A673 (cell line): ENCODE measurements at regions of chr21 and their contacts with region 1.

Region 1: DNA sequence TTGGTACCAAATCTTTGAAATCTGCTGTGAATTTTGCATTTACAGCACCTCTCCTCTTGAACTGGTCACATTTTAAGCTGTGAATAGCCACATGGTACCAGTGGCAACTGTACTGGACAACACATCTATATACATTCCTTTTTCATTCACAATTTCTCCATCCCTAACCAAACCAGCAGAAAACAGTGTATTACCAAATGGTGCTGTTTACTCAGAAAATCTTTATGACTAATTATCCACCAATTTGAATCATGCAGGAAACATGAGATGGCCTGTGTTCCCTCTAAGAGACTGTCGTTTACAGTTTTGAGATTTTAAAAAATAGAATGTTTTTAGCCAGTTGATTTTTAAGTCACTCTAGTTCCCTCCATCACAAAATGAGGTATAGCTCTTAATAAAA is 17.6 kb upstream of the CCT8 start:
- DNase-seq: no peak
- H3K4me3 ChIP-seq: no peak overlapping the region
- H3K27ac ChIP-seq: no peak overlapping the region
- H3K4me1 ChIP-seq: peaks cover 14% of the 10 kb centered on the region
- H3K27me3 ChIP-seq: no peaks in the 10 kb centered on the region
- CTCF ChIP-seq: no peak

Region 2: DNA sequence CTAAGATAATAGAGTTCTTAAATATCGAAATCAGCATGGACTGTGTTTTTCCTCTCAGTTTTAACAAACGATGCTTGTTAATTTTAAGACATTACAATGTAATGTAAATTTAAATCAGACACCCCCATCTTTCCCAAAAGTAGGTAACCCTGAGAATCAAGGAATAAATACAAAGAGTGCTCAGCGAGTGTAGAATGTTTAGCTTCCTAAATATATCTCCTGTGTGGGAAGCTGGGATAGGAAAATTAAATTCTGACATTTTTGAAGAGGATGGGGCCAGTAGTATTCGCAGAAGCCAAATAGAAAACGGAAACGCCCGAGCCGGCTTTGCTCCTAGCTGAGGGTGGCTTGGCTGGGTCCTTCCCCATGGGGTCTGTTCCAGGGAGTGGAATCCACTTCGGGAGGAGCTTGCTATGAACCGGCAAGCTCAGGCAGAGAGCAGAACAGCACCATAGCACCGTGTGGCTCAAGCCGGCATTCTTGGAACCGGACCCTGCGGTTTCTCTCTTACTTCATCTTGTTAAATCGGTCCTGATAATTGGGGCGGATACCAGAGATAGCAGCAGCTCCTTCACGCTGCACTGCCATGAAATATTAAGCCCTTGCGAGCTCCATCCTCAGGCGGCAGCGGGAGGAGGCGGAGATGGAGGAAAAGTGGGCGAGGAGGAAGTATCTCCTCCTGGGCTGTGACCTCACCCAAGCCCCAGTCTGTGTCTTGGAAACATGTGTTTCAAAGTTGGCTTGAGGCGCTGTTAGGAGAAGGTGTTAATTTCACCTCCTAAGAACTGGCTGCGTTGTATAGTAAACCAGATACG is 64.3 kb after region 1 on chr21:
- CTCF ChIA-PET with region 1: interaction called, 22 read pairs
- POLR2A ChIA-PET with region 1: no interaction called
- intact Hi-C with region 1: loop called (anchors 5 kb)
- DNase-seq: peak; percentile 45
- H3K4me3 ChIP-seq: peak overlapping the region; percentile 24
- H3K27ac ChIP-seq: no peak overlapping the region
- H3K4me1 ChIP-seq: peaks cover 21% of the 10 kb centered on the region
- H3K27me3 ChIP-seq: no peaks in the 10 kb centered on the region
- CTCF ChIP-seq: no peak

Region 3: GRCh38 chr21:29164325-29164942 is 73.4 kb after region 1 on chr21:
- CTCF ChIA-PET with region 1: no interaction called
- POLR2A ChIA-PET with region 1: no interaction called
- intact Hi-C with region 1: loop called (anchors 5 kb)
- DNase-seq: peak; percentile 88
- H3K4me3 ChIP-seq: no peak overlapping the region
- H3K27ac ChIP-seq: no peak overlapping the region
- H3K4me1 ChIP-seq: peaks cover 12% of the 10 kb centered on the region
- H3K27me3 ChIP-seq: no peaks in the 10 kb centered on the region
- CTCF ChIP-seq: peak; percentile 86

Region 4: DNA sequence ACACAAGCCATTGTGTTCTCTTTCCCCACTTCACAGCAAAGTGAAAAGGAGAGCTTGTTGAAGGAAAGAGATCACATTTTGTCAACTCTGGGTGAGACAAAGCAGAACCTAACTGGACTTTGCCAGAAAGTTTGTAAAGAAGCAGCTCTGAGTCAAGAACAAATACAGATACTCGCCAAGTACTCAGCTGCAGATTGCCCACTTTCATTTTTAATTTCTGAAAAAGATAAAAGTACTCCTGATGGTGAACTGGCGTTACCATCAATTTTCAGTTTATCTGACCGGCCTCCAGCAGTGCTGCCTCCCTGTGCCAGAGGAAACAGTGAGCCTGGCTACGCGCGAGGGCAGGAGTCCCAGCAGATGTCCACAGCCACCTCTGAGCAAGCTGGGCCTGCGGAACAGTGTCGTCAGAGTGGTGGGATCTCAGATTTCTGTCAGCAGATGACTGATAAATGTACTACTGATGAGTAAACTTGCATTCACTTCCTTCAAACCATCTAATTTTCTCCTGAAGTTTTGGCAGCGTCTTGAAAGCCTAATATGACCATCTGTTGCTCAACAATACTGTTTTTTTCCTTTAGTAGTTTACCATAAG is 251.4 kb after region 1 on chr21:
- CTCF ChIA-PET with region 1: interaction called, 3 read pairs
- POLR2A ChIA-PET with region 1: no interaction called
- intact Hi-C with region 1: loop called (anchors 10 kb)
- DNase-seq: peak; percentile 83
- H3K4me3 ChIP-seq: peak overlapping the region; percentile 11
- H3K27ac ChIP-seq: peak overlapping the region; percentile 74
- H3K4me1 ChIP-seq: peaks cover 47% of the 10 kb centered on the region
- H3K27me3 ChIP-seq: no peaks in the 10 kb centered on the region
- CTCF ChIP-seq: no peak

Region 5: DNA sequence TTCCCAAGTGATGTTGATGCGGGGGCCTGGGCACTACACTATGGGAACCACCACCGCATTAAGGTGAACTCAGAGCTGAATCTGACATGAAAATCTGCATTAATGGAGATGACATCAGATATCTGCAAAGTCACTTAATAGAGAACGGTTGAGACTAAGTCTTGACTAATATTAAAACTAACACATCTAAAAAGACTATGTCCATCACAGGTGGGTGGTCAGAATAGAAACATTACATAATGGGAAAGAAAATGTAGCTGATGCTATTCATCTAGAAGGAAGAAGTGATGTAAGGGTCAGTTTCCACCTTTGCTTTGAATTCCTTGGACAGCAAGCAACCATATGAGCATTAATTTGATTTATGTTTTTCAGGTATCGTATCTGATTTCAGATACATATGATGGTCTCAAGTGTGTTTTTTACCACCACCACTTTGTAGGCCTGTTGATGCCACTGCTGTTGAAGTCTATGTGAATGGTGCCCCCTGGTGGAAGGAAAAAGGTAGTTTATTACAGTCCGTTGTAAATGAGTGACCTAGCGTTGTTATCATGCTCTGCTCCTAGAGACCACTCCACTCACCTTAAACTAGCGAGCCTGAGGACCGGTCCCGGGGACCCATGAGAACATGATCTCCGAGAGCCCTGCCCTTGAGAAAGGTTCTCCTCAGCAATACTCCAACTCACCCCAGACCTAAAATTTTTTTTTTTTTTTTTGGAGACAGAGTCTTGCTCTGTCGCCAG is 281.2 kb after region 1 on chr21:
- CTCF ChIA-PET with region 1: interaction called, 10 read pairs
- POLR2A ChIA-PET with region 1: no interaction called
- intact Hi-C with region 1: loop called (anchors 1 kb)
- DNase-seq: peak; percentile 89
- H3K4me3 ChIP-seq: no peak overlapping the region
- H3K27ac ChIP-seq: no peak overlapping the region
- H3K4me1 ChIP-seq: no peaks in the 10 kb centered on the region
- H3K27me3 ChIP-seq: no peaks in the 10 kb centered on the region
- CTCF ChIP-seq: peak; percentile 71

Region 6: GRCh38 chr21:29771491-29772066 is 680.5 kb after region 1 on chr21:
- CTCF ChIA-PET with region 1: no interaction called
- POLR2A ChIA-PET with region 1: no interaction called
- intact Hi-C with region 1: no loop called
- DNase-seq: no peak
- H3K4me3 ChIP-seq: no peak overlapping the region
- H3K27ac ChIP-seq: no peak overlapping the region
- H3K4me1 ChIP-seq: no peaks in the 10 kb centered on the region
- H3K27me3 ChIP-seq: no peaks in the 10 kb centered on the region
- CTCF ChIP-seq: no peak

Region 7: GRCh38 chr21:29849735-29850176 is 758.7 kb after region 1 on chr21:
- CTCF ChIA-PET with region 1: no interaction called
- POLR2A ChIA-PET with region 1: no interaction called
- intact Hi-C with region 1: loop called (anchors 5 kb)
- DNase-seq: peak; percentile 86
- H3K4me3 ChIP-seq: no peak overlapping the region
- H3K27ac ChIP-seq: no peak overlapping the region
- H3K4me1 ChIP-seq: no peaks in the 10 kb centered on the region
- H3K27me3 ChIP-seq: no peaks in the 10 kb centered on the region
- CTCF ChIP-seq: peak; percentile 84